Mammary epithelial cell (primary cell): ENCODE measurements at regions of chr18 and their contacts with region 1.

Region 1: GRCh38 chr18:63775166-63775730 is at the start of gene SERPINB7:
- DNase-seq: peak; percentile 92
- H3K4me3 ChIP-seq: peak within 1 kb of the TSS in 1 of 3 experiments; percentile 21
- H3K27ac ChIP-seq: peak within 1 kb of the TSS; percentile 72
- H3K4me1 ChIP-seq: peaks cover 39% of the 10 kb centered on the region
- H3K27me3 ChIP-seq: no peaks in the 10 kb centered on the region
- CTCF ChIP-seq: no peak
- total RNA-seq, gene SERPINB7: 13.5 to 42.6 TPM

Region 2: DNA sequence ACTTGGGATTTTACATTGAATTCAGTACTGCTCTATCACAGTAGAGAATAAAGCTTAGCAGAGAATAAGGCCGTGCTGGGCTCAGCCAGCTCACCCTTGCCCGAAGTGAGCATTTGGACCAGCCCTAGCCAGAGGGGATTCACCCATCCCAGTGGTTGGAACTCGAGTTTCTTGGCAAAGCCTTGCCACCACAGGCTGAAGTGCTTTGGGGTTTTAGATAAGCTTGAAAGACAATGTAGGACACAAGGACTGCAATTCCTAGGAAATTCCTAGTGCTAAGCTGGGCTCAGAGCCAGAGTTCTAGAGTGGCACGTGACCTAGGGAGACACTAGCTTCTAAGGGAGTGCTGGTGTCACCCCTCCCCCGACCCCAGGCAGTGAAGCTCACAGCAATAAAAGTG is 44.5 kb before region 1 on chr18:
- CTCF ChIA-PET with region 1: no interaction called
- dilution Hi-C with region 1: no loop called
- in situ Hi-C with region 1: no loop called
- intact Hi-C with region 1: no loop called
- DNase-seq: peak; percentile 74
- H3K4me3 ChIP-seq: no peak overlapping the region
- H3K27ac ChIP-seq: no peak overlapping the region
- H3K4me1 ChIP-seq: peaks cover 19% of the 10 kb centered on the region
- H3K27me3 ChIP-seq: no peaks in the 10 kb centered on the region
- CTCF ChIP-seq: no peak

Region 3: GRCh38 chr18:63831080-63831788 is 56.0 kb after region 1 on chr18:
- CTCF ChIA-PET with region 1: no interaction called
- dilution Hi-C with region 1: no loop called
- in situ Hi-C with region 1: no loop called
- intact Hi-C with region 1: loop called (anchors 5 kb)
- DNase-seq: peak; percentile 76
- H3K4me3 ChIP-seq: no peak overlapping the region
- H3K27ac ChIP-seq: peak overlapping the region; percentile 79
- H3K4me1 ChIP-seq: peaks cover 41% of the 10 kb centered on the region
- H3K27me3 ChIP-seq: no peaks in the 10 kb centered on the region
- CTCF ChIP-seq: no peak